Panc1 (cell line): ENCODE measurements at regions of chr11 and their contacts with region 1.

Region 1: GRCh38 chr11:65418711-65419459 is 3.7 kb upstream of the NEAT1 start:
- DNase-seq: peak; percentile 98
- ATAC-seq: peak; percentile 51
- H3K4me3 ChIP-seq: peak overlapping the region; percentile 3 to 38
- H3K27ac ChIP-seq: peak overlapping the region; percentile 100
- H3K4me1 ChIP-seq: peaks cover 71% of the 10 kb centered on the region
- H3K27me3 ChIP-seq: no peaks in the 10 kb centered on the region
- CTCF ChIP-seq: no peak

Region 2: GRCh38 chr11:65376138-65376713 is 42.7 kb before region 1 on chr11:
- CTCF ChIA-PET with region 1: interaction called, 3 read pairs
- POLR2A ChIA-PET with region 1: interaction called, 10 read pairs
- in situ Hi-C with region 1: no loop called
- intact Hi-C with region 1: no loop called
- DNase-seq: no peak
- ATAC-seq: no peak
- H3K4me3 ChIP-seq: no peak overlapping the region
- H3K27ac ChIP-seq: no peak overlapping the region
- H3K4me1 ChIP-seq: no peaks in the 10 kb centered on the region
- H3K27me3 ChIP-seq: no peaks in the 10 kb centered on the region
- CTCF ChIP-seq: no peak

Region 3: DNA sequence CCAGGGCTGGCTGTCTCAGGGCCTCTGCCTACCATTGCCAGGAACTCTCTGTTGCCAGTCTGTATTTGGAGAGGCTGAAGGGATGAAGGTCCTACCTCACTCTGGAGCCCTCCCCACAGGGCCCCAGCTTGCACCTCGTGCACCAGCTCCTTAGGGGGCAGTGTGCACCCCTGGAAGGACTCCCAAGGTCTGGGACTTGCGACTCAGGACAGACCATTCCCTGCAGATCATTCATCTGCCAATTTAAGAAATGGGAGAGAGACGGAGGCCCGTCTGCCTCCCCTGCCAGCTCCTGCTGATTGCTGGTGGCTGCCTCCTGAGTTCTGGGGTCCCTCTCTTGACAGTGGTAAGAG is 52.5 kb after region 1 on chr11:
- CTCF ChIA-PET with region 1: interaction called, 6 read pairs
- POLR2A ChIA-PET with region 1: interaction called, 11 read pairs
- in situ Hi-C with region 1: no loop called
- intact Hi-C with region 1: no loop called
- DNase-seq: no peak
- ATAC-seq: peak; percentile 78
- H3K4me3 ChIP-seq: peak overlapping the region; percentile 3 to 28; a peak in 2 of 4 replicates
- H3K27ac ChIP-seq: peak overlapping the region; percentile 100
- H3K4me1 ChIP-seq: peaks cover 60% of the 10 kb centered on the region
- H3K27me3 ChIP-seq: no peaks in the 10 kb centered on the region
- CTCF ChIP-seq: peak; percentile 88

Region 4: GRCh38 chr11:65497141-65498041 is 78.5 kb after region 1 on chr11:
- CTCF ChIA-PET with region 1: no interaction called
- POLR2A ChIA-PET with region 1: interaction called, 108 read pairs
- in situ Hi-C with region 1: loop called (anchors 5 kb)
- intact Hi-C with region 1: no loop called
- DNase-seq: no peak
- ATAC-seq: peak; percentile 80
- H3K4me3 ChIP-seq: peak overlapping the region; percentile 78 to 99
- H3K27ac ChIP-seq: peak overlapping the region; percentile 100
- H3K4me1 ChIP-seq: peaks cover 54% of the 10 kb centered on the region
- H3K27me3 ChIP-seq: no peaks in the 10 kb centered on the region
- CTCF ChIP-seq: no peak

Region 5: DNA sequence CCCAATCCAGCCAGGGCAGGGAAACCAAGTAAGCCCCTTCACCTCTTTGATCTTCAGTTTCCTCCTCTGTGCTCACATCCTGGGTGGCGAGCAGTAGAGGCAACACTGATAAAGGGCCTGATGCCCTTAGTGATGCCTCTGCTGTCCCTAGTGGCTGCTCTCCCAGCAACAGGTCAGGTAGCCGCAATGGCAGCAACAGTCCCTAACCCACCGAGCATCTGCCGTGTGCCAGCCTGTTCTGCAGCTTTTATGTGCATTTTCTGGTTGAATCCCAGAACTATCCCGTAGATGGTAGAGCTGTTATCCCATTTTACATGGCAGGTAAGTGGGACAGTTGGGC is 111.2 kb after region 1 on chr11:
- CTCF ChIA-PET with region 1: no interaction called
- POLR2A ChIA-PET with region 1: interaction called, 18 read pairs
- in situ Hi-C with region 1: no loop called
- intact Hi-C with region 1: no loop called
- DNase-seq: no peak
- ATAC-seq: peak; percentile 51; the same call in 1 of the 2 replicates
- H3K4me3 ChIP-seq: no peak overlapping the region
- H3K27ac ChIP-seq: no peak overlapping the region; the same call in 1 of the 2 replicates
- H3K4me1 ChIP-seq: peaks cover 5% of the 10 kb centered on the region; the same call in 1 of the 2 replicates
- H3K27me3 ChIP-seq: no peaks in the 10 kb centered on the region
- CTCF ChIP-seq: no peak; the same call in 1 of the 2 replicates